ENCODE measurements at regions of chr11 and their contacts with region 1.

Region 1: GRCh38 chr11:62665075-62665598 is at the starts of genes C11orf98 and CSKMT:
- DNase-seq: peak; percentile 96
- ATAC-seq: peak; percentile 89
- H3K4me3 Mint-ChIP-seq: peak within 1 kb of the TSS; percentile 98
- H3K27ac Mint-ChIP-seq: peak within 1 kb of the TSS; percentile 92
- H3K4me1 Mint-ChIP-seq: peaks cover 33% of the 10 kb centered on the region
- H3K27me3 Mint-ChIP-seq: no peaks in the 10 kb centered on the region
- CTCF ChIP-seq: no peak
- total RNA-seq, gene C11orf98: 108 TPM
- total RNA-seq, gene CSKMT: 37.1 to 43.6 TPM

Region 2: GRCh38 chr11:62573592-62574362 is 91.4 kb before region 1 on chr11 and contains the start of gene EEF1G:
- CTCF ChIA-PET with region 1: no interaction called
- POLR2A ChIA-PET with region 1: interaction called, 14 read pairs
- intact Hi-C with region 1: no loop called
- DNase-seq: peak; percentile 99
- ATAC-seq: peak; percentile 98
- H3K4me3 Mint-ChIP-seq: peak within 1 kb of the TSS; percentile 96
- H3K27ac Mint-ChIP-seq: peak within 1 kb of the TSS; percentile 97
- H3K4me1 Mint-ChIP-seq: peaks cover 48% of the 10 kb centered on the region
- H3K27me3 Mint-ChIP-seq: no peaks in the 10 kb centered on the region
- CTCF ChIP-seq: no peak
- total RNA-seq, gene EEF1G: 1,925 to 1,979 TPM

Region 3: GRCh38 chr11:62612366-62613290 is 52.5 kb before region 1 on chr11 and contains the starts of genes EML3 and ROM1:
- CTCF ChIA-PET with region 1: interaction called, 10 read pairs
- POLR2A ChIA-PET with region 1: interaction called, 32 read pairs
- intact Hi-C with region 1: no loop called
- DNase-seq: peak; percentile 92
- ATAC-seq: peak; percentile 80
- H3K4me3 Mint-ChIP-seq: peak within 1 kb of the TSS; percentile 96
- H3K27ac Mint-ChIP-seq: peak within 1 kb of the TSS; percentile 97
- H3K4me1 Mint-ChIP-seq: peaks cover 52% of the 10 kb centered on the region
- H3K27me3 Mint-ChIP-seq: no peaks in the 10 kb centered on the region
- CTCF ChIP-seq: peak; percentile 99
- total RNA-seq, gene EML3: 115 to 120 TPM
- total RNA-seq, gene ROM1: 0.79 to 1.1 TPM

Region 4: DNA sequence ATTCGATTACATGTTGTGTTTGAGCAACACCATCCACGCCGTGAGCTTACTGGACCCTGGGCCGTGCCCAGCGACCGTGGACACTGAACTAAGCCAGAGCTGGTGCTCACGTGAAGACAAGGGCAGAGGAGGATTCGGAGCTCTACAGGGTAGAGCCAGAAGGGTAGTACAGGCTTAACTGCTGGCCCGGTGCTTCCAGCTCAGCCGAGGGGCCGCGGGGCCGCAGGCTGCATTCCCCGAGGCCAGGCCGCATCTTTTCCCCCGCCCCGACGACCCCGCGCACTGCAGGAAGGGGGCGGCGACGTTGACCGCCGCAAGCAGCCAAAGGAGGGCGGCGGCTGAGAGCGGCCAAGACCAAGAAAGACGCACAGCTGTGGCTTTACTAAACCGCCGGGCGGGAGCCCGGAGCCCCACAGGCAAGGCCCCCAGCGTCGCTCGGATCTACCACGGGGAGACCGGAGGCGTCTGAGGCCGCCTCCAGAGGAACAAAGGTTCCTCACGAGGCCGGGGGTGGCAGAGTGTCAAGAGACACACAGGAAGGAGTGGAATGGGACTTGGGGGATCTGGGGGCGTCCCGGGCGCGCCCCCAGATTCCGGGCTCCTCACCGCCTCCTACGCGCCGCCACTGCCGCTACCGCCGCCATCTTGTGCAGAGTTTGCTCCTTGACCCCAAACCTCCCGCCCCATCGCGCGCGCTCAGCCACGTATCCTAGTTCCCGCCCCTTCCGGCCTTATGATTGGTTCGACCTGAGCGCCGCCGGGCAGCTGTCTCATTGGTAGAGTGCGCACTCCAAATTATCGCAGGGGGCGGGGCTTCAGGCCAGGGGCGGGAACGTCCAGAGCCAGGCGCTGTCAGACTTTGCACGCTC is 18.9 kb before region 1 on chr11 and contains the start of gene GANAB:
- CTCF ChIA-PET with region 1: interaction called, 11 read pairs
- POLR2A ChIA-PET with region 1: interaction called, 263 read pairs
- intact Hi-C with region 1: no loop called
- DNase-seq: peak; percentile 100
- ATAC-seq: peak; percentile 98
- H3K4me3 Mint-ChIP-seq: peak within 1 kb of the TSS; percentile 100
- H3K27ac Mint-ChIP-seq: peak within 1 kb of the TSS; percentile 99
- H3K4me1 Mint-ChIP-seq: peaks cover 30% of the 10 kb centered on the region
- H3K27me3 Mint-ChIP-seq: no peaks in the 10 kb centered on the region
- CTCF ChIP-seq: no peak
- total RNA-seq, gene GANAB: 205 to 217 TPM

Region 5: GRCh38 chr11:62678770-62679696 is 13.9 kb after region 1 on chr11 and contains the start of gene UBXN1:
- CTCF ChIA-PET with region 1: interaction called, 11 read pairs
- POLR2A ChIA-PET with region 1: interaction called, 67 read pairs
- intact Hi-C with region 1: no loop called
- DNase-seq: peak; percentile 94
- ATAC-seq: peak; percentile 76
- H3K4me3 Mint-ChIP-seq: peak within 1 kb of the TSS; percentile 86
- H3K27ac Mint-ChIP-seq: peak within 1 kb of the TSS; percentile 93
- H3K4me1 Mint-ChIP-seq: peaks cover 29% of the 10 kb centered on the region
- H3K27me3 Mint-ChIP-seq: no peaks in the 10 kb centered on the region
- CTCF ChIP-seq: no peak
- total RNA-seq, gene UBXN1: 104 to 120 TPM

Region 6: GRCh38 chr11:62705880-62706849 is 41.0 kb after region 1 on chr11:
- CTCF ChIA-PET with region 1: interaction called, 3 read pairs
- POLR2A ChIA-PET with region 1: interaction called, 15 read pairs
- intact Hi-C with region 1: no loop called
- DNase-seq: peak; percentile 97
- ATAC-seq: peak; percentile 77
- H3K4me3 Mint-ChIP-seq: peak overlapping the region; percentile 84
- H3K27ac Mint-ChIP-seq: peak overlapping the region; percentile 77
- H3K4me1 Mint-ChIP-seq: peaks cover 43% of the 10 kb centered on the region
- H3K27me3 Mint-ChIP-seq: no peaks in the 10 kb centered on the region
- CTCF ChIP-seq: no peak

Measured in activated CD8-positive, alpha-beta T cell treated with anti-CD3 and anti-CD28 coated beads for 36 hours (primary cell).